MCF 10A (cell line): ENCODE measurements at regions of chr3 and their contacts with region 1.

Region 1: GRCh38 chr3:98994128-98994762 is 92.8 kb upstream of the DCBLD2 start:
- DNase-seq: peak; percentile 55
- H3K4me3 Mint-ChIP-seq: no peak overlapping the region
- H3K27ac Mint-ChIP-seq: no peak overlapping the region
- H3K4me1 Mint-ChIP-seq: no peaks in the 10 kb centered on the region
- H3K27me3 Mint-ChIP-seq: no peaks in the 10 kb centered on the region
- CTCF ChIP-seq: peak; percentile 53

Region 2: GRCh38 chr3:98817547-98818041 is 176.7 kb before region 1 on chr3:
- CTCF ChIA-PET with region 1: interaction called, 225 read pairs
- POLR2A ChIA-PET with region 1: interaction called, 9 read pairs
- intact Hi-C with region 1: loop called (anchors 1 kb)
- DNase-seq: peak; percentile 50
- H3K4me3 Mint-ChIP-seq: no peak overlapping the region
- H3K27ac Mint-ChIP-seq: peak overlapping the region; percentile 27
- H3K4me1 Mint-ChIP-seq: peaks cover 13% of the 10 kb centered on the region
- H3K27me3 Mint-ChIP-seq: no peaks in the 10 kb centered on the region
- CTCF ChIP-seq: peak; percentile 53

Region 3: DNA sequence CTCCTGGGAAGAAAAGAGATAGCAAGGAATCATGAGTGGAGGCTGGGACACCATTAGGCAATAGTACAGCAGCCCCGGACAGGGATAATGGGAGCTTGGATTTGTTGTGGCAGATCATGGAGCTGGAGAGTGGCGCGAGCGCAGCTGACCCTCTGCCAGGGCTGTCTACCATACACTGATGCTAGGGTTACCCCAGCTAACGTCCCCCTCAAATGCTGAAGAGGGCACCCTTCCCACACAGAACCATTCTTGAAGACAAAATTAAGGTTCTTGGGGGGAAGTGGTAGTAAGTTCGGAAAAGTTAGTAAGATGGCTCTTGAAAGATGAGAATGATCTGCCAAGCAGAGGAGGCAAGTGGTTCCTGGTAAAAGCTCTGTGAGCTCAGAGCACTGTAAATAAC is 170.0 kb before region 1 on chr3:
- CTCF ChIA-PET with region 1: interaction called, 44 read pairs
- POLR2A ChIA-PET with region 1: interaction called, 3 read pairs
- intact Hi-C with region 1: no loop called
- DNase-seq: no peak
- H3K4me3 Mint-ChIP-seq: no peak overlapping the region
- H3K27ac Mint-ChIP-seq: no peak overlapping the region
- H3K4me1 Mint-ChIP-seq: no peaks in the 10 kb centered on the region
- H3K27me3 Mint-ChIP-seq: no peaks in the 10 kb centered on the region
- CTCF ChIP-seq: no peak

Region 4: GRCh38 chr3:98830004-98830403 is 164.2 kb before region 1 on chr3:
- CTCF ChIA-PET with region 1: interaction called, 44 read pairs
- POLR2A ChIA-PET with region 1: interaction called, 3 read pairs
- intact Hi-C with region 1: no loop called
- DNase-seq: no peak
- H3K4me3 Mint-ChIP-seq: no peak overlapping the region
- H3K27ac Mint-ChIP-seq: no peak overlapping the region
- H3K4me1 Mint-ChIP-seq: no peaks in the 10 kb centered on the region
- H3K27me3 Mint-ChIP-seq: no peaks in the 10 kb centered on the region
- CTCF ChIP-seq: no peak

Region 5: GRCh38 chr3:98855806-98856400 is 138.3 kb before region 1 on chr3:
- CTCF ChIA-PET with region 1: interaction called, 16 read pairs
- POLR2A ChIA-PET with region 1: no interaction called
- intact Hi-C with region 1: no loop called
- DNase-seq: peak; percentile 90
- H3K4me3 Mint-ChIP-seq: no peak overlapping the region
- H3K27ac Mint-ChIP-seq: peak overlapping the region; percentile 61
- H3K4me1 Mint-ChIP-seq: peaks cover 11% of the 10 kb centered on the region
- H3K27me3 Mint-ChIP-seq: no peaks in the 10 kb centered on the region
- CTCF ChIP-seq: no peak

Region 6: DNA sequence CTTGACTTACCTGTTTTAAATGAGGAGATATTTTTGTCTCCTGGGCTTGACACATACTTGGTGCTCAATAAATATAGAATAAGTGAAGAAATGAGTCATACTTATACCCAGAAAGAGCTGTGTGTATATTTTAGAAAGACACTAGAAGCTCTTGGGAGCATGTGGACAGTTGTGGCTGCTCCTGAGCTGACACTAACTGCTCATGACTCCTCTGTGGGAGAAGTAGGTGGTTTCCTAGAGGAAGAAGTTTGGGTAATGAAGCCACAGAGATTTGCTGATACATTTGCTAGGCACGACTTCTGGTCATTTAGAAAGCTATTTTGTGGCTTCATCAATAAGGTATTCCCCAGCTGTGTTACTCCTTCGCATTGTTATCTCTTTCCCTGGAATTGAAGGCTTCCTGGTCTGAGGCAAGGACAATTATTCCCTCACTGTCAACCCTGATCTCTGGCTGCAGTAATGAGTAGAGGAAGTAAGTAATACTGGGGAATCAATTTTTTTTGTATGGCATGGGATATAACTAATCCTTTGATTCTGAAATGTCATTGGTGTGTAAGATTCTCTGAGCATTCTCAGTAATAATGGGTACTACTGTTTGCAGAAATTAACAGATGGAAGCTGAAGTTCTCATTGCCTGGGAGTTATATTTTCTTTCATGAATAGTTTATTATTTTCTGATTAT is 13.2 kb before region 1 on chr3:
- CTCF ChIA-PET with region 1: interaction called, 15 read pairs
- POLR2A ChIA-PET with region 1: interaction called, 5 read pairs
- intact Hi-C with region 1: no loop called
- DNase-seq: no peak
- H3K4me3 Mint-ChIP-seq: no peak overlapping the region
- H3K27ac Mint-ChIP-seq: no peak overlapping the region
- H3K4me1 Mint-ChIP-seq: peaks cover 23% of the 10 kb centered on the region
- H3K27me3 Mint-ChIP-seq: no peaks in the 10 kb centered on the region
- CTCF ChIP-seq: no peak

Region 7: DNA sequence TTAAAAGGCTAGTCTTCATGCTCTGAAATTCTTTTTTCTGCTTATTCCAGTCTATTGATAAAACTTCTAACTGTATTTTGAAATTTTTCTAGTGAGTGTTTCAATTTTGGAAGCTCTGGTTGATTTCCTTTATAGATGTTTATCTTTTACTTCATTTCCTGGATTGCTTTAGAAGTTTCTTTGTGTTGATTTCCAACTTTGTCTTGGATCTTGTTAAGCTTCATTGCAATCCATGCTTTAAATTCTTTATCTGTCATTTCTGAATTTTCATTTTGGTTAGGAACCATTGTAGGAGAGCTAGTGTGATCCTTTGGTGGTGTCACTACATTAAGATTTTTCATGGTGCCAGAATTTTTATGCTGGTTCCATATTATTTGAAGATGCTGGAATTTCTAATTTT is 12.4 kb after region 1 on chr3:
- CTCF ChIA-PET with region 1: interaction called, 20 read pairs
- POLR2A ChIA-PET with region 1: no interaction called
- intact Hi-C with region 1: no loop called
- DNase-seq: no peak
- H3K4me3 Mint-ChIP-seq: no peak overlapping the region
- H3K27ac Mint-ChIP-seq: no peak overlapping the region
- H3K4me1 Mint-ChIP-seq: no peaks in the 10 kb centered on the region
- H3K27me3 Mint-ChIP-seq: no peaks in the 10 kb centered on the region
- CTCF ChIP-seq: no peak